Naive thymus-derived CD4-positive, alpha-beta T cell (primary cell): ENCODE measurements at regions of chr12 and their contacts with region 1.

Region 1: GRCh38 chr12:3920351-3921150 is 47.4 kb upstream of the PARP11 start:
- DNase-seq: no peak
- ATAC-seq: no peak
- H3K4me3 ChIP-seq: no peak overlapping the region
- H3K4me3 Mint-ChIP-seq: no peak overlapping the region
- H3K27ac ChIP-seq: no peak overlapping the region
- H3K27ac Mint-ChIP-seq: no peak overlapping the region
- H3K4me1 ChIP-seq: peaks cover 0 to 21% of the 10 kb centered on the region in 2 donors
- H3K4me1 Mint-ChIP-seq: peaks cover 6 to 51% (median 43%) of the 10 kb centered on the region in 7 donors
- H3K27me3 ChIP-seq: no peaks in the 10 kb centered on the region
- H3K27me3 Mint-ChIP-seq: peaks cover 0 to 18% (median 0%) of the 10 kb centered on the region in 5 donors

Region 2: GRCh38 chr12:3905664-3906063 is 14.9 kb before region 1 on chr12:
- CTCF ChIA-PET with region 1: interaction called, 3 read pairs
- POLR2A ChIA-PET with region 1: interaction called, 6 read pairs
- intact Hi-C with region 1: loop called in 1 of 2 experiments (anchors 2 kb)
- DNase-seq: peak in 1 of 9 donors; percentile 18
- ATAC-seq: peak; percentile 44
- H3K4me3 ChIP-seq: peak overlapping the region; percentile 52
- H3K4me3 Mint-ChIP-seq: peak overlapping the region; percentile 82 to 98 (median 91)
- H3K27ac ChIP-seq: peak overlapping the region; percentile 71
- H3K27ac Mint-ChIP-seq: peak overlapping the region; percentile 81 to 99 (median 97)
- H3K4me1 ChIP-seq: peaks cover 0 to 18% of the 10 kb centered on the region in 2 donors
- H3K4me1 Mint-ChIP-seq: peaks cover 28 to 64% (median 52%) of the 10 kb centered on the region in 7 donors
- H3K27me3 ChIP-seq: no peaks in the 10 kb centered on the region
- H3K27me3 Mint-ChIP-seq: no peaks in the 10 kb centered on the region

Region 3: GRCh38 chr12:3931746-3932145 is 11.2 kb after region 1 on chr12:
- CTCF ChIA-PET with region 1: no interaction called
- POLR2A ChIA-PET with region 1: interaction called, 5 read pairs
- intact Hi-C with region 1: loop called in 1 of 2 experiments (anchors 1 kb)
- DNase-seq: no peak
- ATAC-seq: no peak
- H3K4me3 ChIP-seq: no peak overlapping the region
- H3K4me3 Mint-ChIP-seq: peak overlapping the region in 3 of 10 donors; percentile 7 to 81 (median 27)
- H3K27ac ChIP-seq: no peak overlapping the region
- H3K27ac Mint-ChIP-seq: peak overlapping the region in 6 of 9 donors; percentile 51 to 89 (median 74)
- H3K4me1 ChIP-seq: peaks cover 0 to 46% of the 10 kb centered on the region in 2 donors
- H3K4me1 Mint-ChIP-seq: peaks cover 29 to 82% (median 73%) of the 10 kb centered on the region in 7 donors
- H3K27me3 ChIP-seq: no peaks in the 10 kb centered on the region
- H3K27me3 Mint-ChIP-seq: peaks cover 0 to 16% (median 0%) of the 10 kb centered on the region in 5 donors